CD4-positive, alpha-beta memory T cell (primary cell): ENCODE measurements at regions of chr9 and their contacts with region 1.

Region 1: DNA sequence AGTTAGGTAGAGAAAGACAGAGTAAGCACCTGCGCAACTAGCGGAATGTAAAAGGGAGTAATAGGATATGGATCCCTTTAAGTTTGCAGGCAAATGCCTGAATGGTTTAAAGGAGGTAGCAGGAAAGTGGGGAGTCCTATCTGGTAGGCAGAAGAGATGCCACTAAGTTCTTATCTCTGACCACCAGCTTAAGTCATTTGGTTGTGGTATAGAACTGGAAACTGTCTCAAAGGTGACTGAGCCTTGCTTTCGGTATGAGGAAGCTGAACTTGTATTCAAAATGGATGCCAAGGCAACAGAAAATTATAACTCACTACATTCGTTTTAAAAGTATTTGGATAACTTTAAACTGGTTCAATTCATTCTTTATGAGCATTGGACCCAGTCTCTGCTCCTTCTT is 475.6 kb downstream of the DMRTA1 start:
- DNase-seq: no peak
- H3K4me3 ChIP-seq: no peak overlapping the region
- H3K4me3 Mint-ChIP-seq: no peak overlapping the region
- H3K27ac ChIP-seq: no peak overlapping the region
- H3K27ac Mint-ChIP-seq: no peak overlapping the region
- H3K4me1 ChIP-seq: no peaks in the 10 kb centered on the region
- H3K4me1 Mint-ChIP-seq: no peaks in the 10 kb centered on the region
- H3K27me3 ChIP-seq: no peaks in the 10 kb centered on the region
- H3K27me3 Mint-ChIP-seq: no peaks in the 10 kb centered on the region

Region 2: GRCh38 chr9:23011669-23012068 is 89.4 kb after region 1 on chr9:
- CTCF ChIA-PET with region 1: no interaction called
- POLR2A ChIA-PET with region 1: no interaction called
- intact Hi-C with region 1: no loop called
- DNase-seq: no peak
- H3K4me3 ChIP-seq: no peak overlapping the region
- H3K4me3 Mint-ChIP-seq: no peak overlapping the region
- H3K27ac ChIP-seq: no peak overlapping the region
- H3K27ac Mint-ChIP-seq: no peak overlapping the region
- H3K4me1 ChIP-seq: no peaks in the 10 kb centered on the region
- H3K4me1 Mint-ChIP-seq: no peaks in the 10 kb centered on the region
- H3K27me3 ChIP-seq: no peaks in the 10 kb centered on the region
- H3K27me3 Mint-ChIP-seq: no peaks in the 10 kb centered on the region

Region 3: DNA sequence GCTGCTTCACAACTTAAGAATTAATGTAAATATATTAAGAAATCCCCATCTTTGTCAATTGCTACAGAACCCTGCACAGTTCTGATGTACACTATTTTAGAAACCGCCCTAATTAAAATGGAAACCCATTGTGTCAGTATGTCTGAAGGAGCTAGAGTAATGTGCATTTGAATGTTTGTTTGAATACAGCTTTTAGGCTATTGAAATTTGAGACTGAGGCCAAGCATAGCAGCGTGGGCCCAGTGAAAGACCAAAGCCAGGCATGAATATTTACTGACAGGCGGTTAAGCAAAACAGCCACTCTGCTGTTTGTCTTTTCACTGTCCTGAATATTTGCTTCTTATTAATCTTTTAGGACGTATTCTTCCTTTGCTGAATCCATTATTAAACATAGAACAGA is 1371.2 kb after region 1 on chr9:
- CTCF ChIA-PET with region 1: no interaction called
- POLR2A ChIA-PET with region 1: no interaction called
- intact Hi-C with region 1: loop called (anchors 5 kb)
- DNase-seq: no peak
- H3K4me3 ChIP-seq: no peak overlapping the region
- H3K4me3 Mint-ChIP-seq: no peak overlapping the region
- H3K27ac ChIP-seq: no peak overlapping the region
- H3K27ac Mint-ChIP-seq: no peak overlapping the region
- H3K4me1 ChIP-seq: no peaks in the 10 kb centered on the region
- H3K4me1 Mint-ChIP-seq: no peaks in the 10 kb centered on the region
- H3K27me3 ChIP-seq: no peaks in the 10 kb centered on the region
- H3K27me3 Mint-ChIP-seq: no peaks in the 10 kb centered on the region